CD8-positive, alpha-beta T cell (primary cell): ENCODE measurements at regions of chr16 and their contacts with region 1.

Region 1: DNA sequence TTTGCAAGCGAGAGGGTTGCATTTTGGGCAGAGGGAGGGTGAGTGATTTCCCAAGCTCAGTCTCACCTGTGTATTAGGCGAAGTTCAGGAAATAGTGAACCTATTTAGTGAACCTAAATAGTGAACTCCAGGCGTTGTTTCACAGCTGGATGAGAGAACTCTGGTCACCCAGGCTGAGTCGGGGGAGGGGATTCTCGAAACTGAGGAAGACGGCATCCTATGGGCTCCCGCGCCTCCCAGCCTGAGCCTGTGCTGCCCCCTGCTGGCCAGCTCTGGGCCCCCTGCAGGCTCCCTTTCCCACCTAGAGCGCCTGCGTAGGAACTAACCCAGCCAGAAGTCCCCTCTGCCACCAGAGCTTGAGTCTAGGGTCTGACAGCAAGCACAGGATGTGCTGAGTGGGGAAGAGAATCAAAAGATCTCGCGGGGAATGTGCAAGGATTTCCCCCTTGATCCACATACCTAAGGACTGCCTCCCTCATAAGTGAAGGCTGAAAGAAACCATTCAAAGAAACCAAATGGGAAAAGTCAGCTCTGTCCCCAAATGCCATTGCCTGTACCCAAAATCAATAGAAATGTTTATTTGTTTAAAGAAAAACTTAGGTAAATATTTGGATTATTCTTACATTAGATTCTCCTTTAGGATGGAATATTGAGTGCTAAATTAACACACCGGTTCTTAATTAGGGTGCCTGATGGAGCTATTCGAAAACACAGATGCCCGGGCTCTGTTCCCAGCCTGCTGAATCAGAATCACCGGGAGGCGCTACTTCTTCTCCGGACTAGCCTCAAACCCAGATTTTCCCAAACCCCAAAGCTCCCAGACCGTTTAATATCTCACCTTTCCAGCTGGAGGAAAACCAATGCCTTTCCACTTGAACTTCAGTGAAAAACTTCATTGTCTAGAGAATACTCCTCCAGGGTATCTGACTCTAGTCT is 14.8 kb upstream of the MARVELD3 start:
- DNase-seq: peak; percentile 56 to 86 (median 79)
- ATAC-seq: peak; percentile 97
- H3K4me3 ChIP-seq: no peak overlapping the region
- H3K4me3 Mint-ChIP-seq: peak overlapping the region; percentile 22
- H3K27ac ChIP-seq: no peak overlapping the region
- H3K27ac Mint-ChIP-seq: no peak overlapping the region
- H3K4me1 ChIP-seq: no peaks in the 10 kb centered on the region
- H3K4me1 Mint-ChIP-seq: peaks cover 2% of the 10 kb centered on the region
- H3K27me3 ChIP-seq: no peaks in the 10 kb centered on the region
- H3K27me3 Mint-ChIP-seq: peaks cover 38% of the 10 kb centered on the region
- CTCF ChIP-seq: peak; percentile 88

Region 2: DNA sequence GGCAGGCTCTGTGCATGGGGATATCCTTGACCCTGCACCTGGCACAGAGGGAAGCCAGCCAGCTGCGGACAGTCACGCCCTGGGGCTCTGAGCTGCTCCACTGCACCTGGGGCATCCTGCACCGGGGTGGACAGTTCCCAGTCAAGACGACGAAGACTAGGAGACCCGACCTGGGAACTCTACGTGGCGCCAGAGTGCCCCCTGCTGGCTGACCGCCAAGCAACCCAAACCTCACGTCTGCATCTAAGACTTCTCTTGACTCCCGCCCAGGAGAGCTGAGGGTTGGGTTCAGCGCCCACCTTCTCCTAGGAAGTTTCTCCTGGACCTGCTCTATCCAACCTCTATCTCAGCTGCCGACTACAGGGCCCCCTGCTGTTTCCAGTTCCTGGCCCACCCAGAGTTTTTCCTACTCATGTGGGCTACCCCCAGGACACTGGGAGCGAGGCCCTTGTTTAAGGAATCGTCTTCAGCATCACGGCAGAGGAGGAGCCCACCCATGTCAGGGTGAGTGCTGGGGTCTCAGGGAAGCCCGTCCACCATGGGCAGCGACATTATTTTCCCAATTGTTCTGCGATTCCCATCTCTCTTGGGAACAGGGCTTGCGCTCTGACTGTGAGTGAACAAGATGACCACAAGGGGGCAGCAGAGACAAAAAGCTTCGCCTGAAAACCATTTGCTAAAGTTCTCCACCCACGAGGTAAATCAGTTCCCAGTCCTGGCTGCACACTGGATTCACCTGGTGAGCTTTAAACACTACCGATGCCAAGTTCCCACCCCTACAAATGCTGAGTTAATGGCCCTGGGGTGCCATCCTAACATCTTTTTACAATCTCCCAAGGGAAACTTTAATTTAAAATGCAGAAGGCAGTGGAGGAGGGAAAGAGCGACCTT is 198.7 kb before region 1 on chr16:
- CTCF ChIA-PET with region 1: interaction called, 44 read pairs
- POLR2A ChIA-PET with region 1: no interaction called
- intact Hi-C with region 1: loop called (anchors 1 kb)
- DNase-seq: peak; percentile 30 to 80 (median 69)
- ATAC-seq: peak; percentile 65
- H3K4me3 ChIP-seq: no peak overlapping the region
- H3K4me3 Mint-ChIP-seq: no peak overlapping the region
- H3K27ac ChIP-seq: no peak overlapping the region
- H3K27ac Mint-ChIP-seq: no peak overlapping the region
- H3K4me1 ChIP-seq: peaks cover 6% of the 10 kb centered on the region
- H3K4me1 Mint-ChIP-seq: peaks cover 11% of the 10 kb centered on the region
- H3K27me3 ChIP-seq: no peaks in the 10 kb centered on the region
- H3K27me3 Mint-ChIP-seq: peaks cover 14% of the 10 kb centered on the region
- CTCF ChIP-seq: peak; percentile 82

Region 3: GRCh38 chr16:71461686-71462648 is 149.2 kb before region 1 on chr16 and contains the start of gene ZNF23:
- CTCF ChIA-PET with region 1: interaction called, 10 read pairs
- POLR2A ChIA-PET with region 1: no interaction called
- intact Hi-C with region 1: no loop called
- DNase-seq: peak; percentile 55 to 88 (median 79)
- ATAC-seq: peak; percentile 95
- H3K4me3 ChIP-seq: peak within 1 kb of the TSS; percentile 96 to 100
- H3K4me3 Mint-ChIP-seq: peak within 1 kb of the TSS; percentile 96
- H3K27ac ChIP-seq: peak within 1 kb of the TSS; percentile 92 to 93
- H3K27ac Mint-ChIP-seq: peak within 1 kb of the TSS; percentile 96
- H3K4me1 ChIP-seq: peaks cover 19% of the 10 kb centered on the region
- H3K4me1 Mint-ChIP-seq: peaks cover 32% of the 10 kb centered on the region
- H3K27me3 ChIP-seq: no peaks in the 10 kb centered on the region
- H3K27me3 Mint-ChIP-seq: no peaks in the 10 kb centered on the region
- CTCF ChIP-seq: peak; percentile 29
- total RNA-seq, gene ZNF23: 8.0 to 8.5 TPM

Region 4: GRCh38 chr16:71593048-71593999 is 17.9 kb before region 1 on chr16:
- CTCF ChIA-PET with region 1: interaction called, 10 read pairs
- POLR2A ChIA-PET with region 1: no interaction called
- intact Hi-C with region 1: no loop called
- DNase-seq: no peak
- ATAC-seq: no peak
- H3K4me3 ChIP-seq: no peak overlapping the region
- H3K4me3 Mint-ChIP-seq: no peak overlapping the region
- H3K27ac ChIP-seq: no peak overlapping the region
- H3K27ac Mint-ChIP-seq: no peak overlapping the region
- H3K4me1 ChIP-seq: no peaks in the 10 kb centered on the region
- H3K4me1 Mint-ChIP-seq: no peaks in the 10 kb centered on the region
- H3K27me3 ChIP-seq: no peaks in the 10 kb centered on the region
- H3K27me3 Mint-ChIP-seq: peaks cover 52% of the 10 kb centered on the region
- CTCF ChIP-seq: no peak